A673 (cell line): ENCODE measurements at regions of chr9 and their contacts with region 1.

Region 1: GRCh38 chr9:114033397-114034103 is 44.5 kb downstream of the AMBP start:
- DNase-seq: peak; percentile 48
- H3K4me3 ChIP-seq: no peak overlapping the region
- H3K27ac ChIP-seq: no peak overlapping the region
- H3K4me1 ChIP-seq: peaks cover 7% of the 10 kb centered on the region
- H3K27me3 ChIP-seq: no peaks in the 10 kb centered on the region
- CTCF ChIP-seq: peak; percentile 66

Region 2: GRCh38 chr9:113690055-113690740 is 343.4 kb before region 1 on chr9:
- CTCF ChIA-PET with region 1: no interaction called
- POLR2A ChIA-PET with region 1: no interaction called
- intact Hi-C with region 1: loop called (anchors 5 kb)
- DNase-seq: no peak
- H3K4me3 ChIP-seq: no peak overlapping the region
- H3K27ac ChIP-seq: no peak overlapping the region
- H3K4me1 ChIP-seq: peaks cover 7% of the 10 kb centered on the region
- H3K27me3 ChIP-seq: peaks cover 35% of the 10 kb centered on the region
- CTCF ChIP-seq: no peak

Region 3: GRCh38 chr9:114889802-114890251 is 856.3 kb after region 1 on chr9:
- CTCF ChIA-PET with region 1: no interaction called
- POLR2A ChIA-PET with region 1: no interaction called
- intact Hi-C with region 1: no loop called
- DNase-seq: no peak
- H3K4me3 ChIP-seq: no peak overlapping the region
- H3K27ac ChIP-seq: no peak overlapping the region
- H3K4me1 ChIP-seq: peaks cover 6% of the 10 kb centered on the region
- H3K27me3 ChIP-seq: no peaks in the 10 kb centered on the region
- CTCF ChIP-seq: no peak